Right ventricle myocardium inferior (tissue), 1 donor: ENCODE measurements at regions of chr10 and their contacts with region 1.

Region 1: GRCh38 chr10:119289227-119289920 is 82.0 kb downstream of the GRK5 start:
- DNase-seq: no peak
- ATAC-seq: peak; percentile 6

Region 2: GRCh38 chr10:118832241-118832651 is 457.1 kb before region 1 on chr10:
- intact Hi-C with region 1: no loop called
- DNase-seq: peak; percentile 85
- ATAC-seq: peak; percentile 54

Region 3: DNA sequence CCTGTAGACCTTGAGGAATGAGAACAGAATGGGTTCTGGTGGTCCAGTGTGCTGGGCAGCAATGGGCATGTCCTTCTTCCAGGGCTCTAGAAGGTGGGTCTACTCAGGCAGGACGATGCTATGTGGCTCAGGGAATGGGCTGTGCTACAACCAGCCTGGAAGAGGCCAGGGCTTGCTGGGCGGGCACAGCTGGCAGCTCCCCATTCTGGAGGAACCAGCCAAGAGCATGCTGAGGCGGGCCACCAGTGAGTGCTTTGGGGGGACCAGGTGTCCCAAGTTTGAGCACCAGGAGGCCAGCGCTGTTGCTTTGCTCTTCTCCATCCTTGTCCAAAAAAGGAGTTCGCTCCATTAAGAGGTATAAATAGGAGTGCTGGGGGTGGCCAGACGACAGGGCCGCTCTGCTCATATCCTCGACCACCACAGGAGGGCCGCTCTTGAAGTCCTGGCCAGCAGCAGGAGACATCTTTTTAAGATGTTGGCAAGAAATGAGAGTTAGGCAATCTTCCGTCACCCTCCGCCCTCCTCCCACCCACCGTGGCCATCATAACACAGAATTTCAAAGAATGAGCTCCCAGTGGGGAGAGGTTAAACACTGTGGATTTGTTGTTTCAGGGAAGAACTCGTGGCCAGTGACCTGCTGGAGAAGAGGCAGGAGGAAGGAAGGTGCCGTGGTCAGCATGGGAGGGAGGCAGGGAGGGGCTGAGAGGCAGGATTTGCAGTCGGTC is 59.3 kb after region 1 on chr10:
- intact Hi-C with region 1: loop called (anchors 5 kb)
- DNase-seq: no peak
- ATAC-seq: peak; percentile 56